GM12878 (cell line): ENCODE measurements at regions of chr11 and their contacts with region 1.

Region 1: GRCh38 chr11:59076876-59077571 is 9.1 kb upstream of the GLYATL1B start:
- DNase-seq: no peak
- ATAC-seq: peak; percentile 97
- H3K4me3 ChIP-seq: no peak overlapping the region
- H3K27ac ChIP-seq: no peak overlapping the region
- H3K4me1 ChIP-seq: peaks cover 27% of the 10 kb centered on the region
- H3K27me3 ChIP-seq: no peaks in the 10 kb centered on the region
- CTCF ChIP-seq: no peak
- EP300 ChIP-seq: no peak
- POLR2A ChIP-seq: no peak
- RAD21 ChIP-seq: no peak

Region 2: DNA sequence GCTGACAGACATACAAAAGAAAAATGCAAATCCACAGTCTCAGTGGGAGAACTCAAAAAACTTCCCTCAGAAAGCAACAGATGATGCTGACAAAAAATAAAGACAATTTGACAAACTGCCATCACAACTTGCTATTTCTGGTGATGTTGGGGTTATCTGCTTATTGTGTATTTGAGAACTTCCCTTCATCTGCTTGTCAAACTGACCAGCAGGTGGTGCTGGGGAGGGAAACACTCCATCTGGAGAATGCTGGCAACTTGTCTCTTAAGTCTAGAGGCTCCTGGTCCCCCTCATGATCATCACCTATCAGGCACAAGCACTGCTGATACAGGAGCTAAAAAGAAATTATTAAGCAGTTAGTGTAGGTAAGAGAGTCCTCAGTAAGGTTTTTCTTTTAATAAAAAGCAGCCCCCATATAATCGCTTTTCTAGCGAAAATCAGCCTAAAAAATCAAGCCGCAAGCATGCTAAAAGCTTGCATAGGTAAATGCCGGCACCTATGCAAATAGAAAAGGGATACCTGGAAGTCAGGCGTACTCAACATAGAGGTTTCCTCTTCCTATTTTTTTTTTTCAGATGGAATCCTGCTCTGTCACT is 20.2 kb after region 1 on chr11:
- CTCF ChIA-PET with region 1: interaction called, 10 read pairs
- POLR2A ChIA-PET with region 1: interaction called, 3 read pairs
- RAD21 ChIA-PET with region 1: no interaction called
- SMC1A ChIA-PET with region 1: interaction called, 9 read pairs
- in situ Hi-C with region 1: no loop called
- intact Hi-C with region 1: no loop called
- DNase-seq: no peak
- ATAC-seq: peak; percentile 70
- H3K4me3 ChIP-seq: 0 out of 2 replicates have a peak overlapping the region, but pooled peaks have one; percentile 3
- H3K27ac ChIP-seq: peak overlapping the region; percentile 53
- H3K4me1 ChIP-seq: peaks cover 22% of the 10 kb centered on the region
- H3K27me3 ChIP-seq: no peaks in the 10 kb centered on the region
- CTCF ChIP-seq: peak; percentile 51 to 67 (median 63)
- EP300 ChIP-seq: no peak
- POLR2A ChIP-seq: no peak
- RAD21 ChIP-seq: peak; percentile 50